Head of caudate nucleus (tissue), 42 donors: ENCODE measurements at regions of chr17 and their contacts with region 1.

Region 1: DNA sequence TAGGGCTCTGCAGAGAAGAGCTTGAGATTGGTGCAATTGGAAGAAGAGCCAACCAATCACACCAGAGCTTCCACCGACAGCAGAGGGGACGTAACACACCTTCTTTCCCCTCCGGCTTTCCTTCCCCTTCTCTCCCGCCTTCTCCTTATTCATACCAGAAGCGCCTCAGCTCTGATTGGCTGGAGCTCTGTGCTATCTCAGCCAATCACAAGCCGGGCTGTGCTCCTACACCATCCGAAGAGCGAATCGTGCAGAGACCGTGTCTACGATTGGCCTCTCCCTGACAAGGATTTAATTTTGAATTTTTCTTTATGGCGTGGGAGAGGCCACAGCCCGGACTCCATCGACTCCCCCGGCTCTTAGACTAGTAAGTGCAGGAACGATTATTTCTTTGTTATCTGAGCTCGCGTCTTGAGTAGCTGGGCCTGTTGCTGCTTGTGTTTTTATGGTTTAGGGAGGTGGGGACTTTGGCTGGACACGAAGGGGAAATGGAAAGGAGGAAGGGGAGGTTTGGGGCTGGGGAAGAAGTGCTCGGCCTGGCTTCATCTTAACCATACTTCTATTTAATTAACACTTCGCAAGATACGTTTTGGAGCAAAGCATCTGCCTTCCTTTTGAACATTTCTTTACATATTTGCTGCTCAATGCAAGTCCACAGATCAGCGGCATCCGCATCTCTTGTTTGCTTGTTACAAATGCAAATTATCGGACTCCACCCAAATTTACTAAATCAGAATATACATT is at the start of gene PRR11:
- DNase-seq: peak in 41 of 42 donors; percentile 90 to 99 (median 97)

Region 2: DNA sequence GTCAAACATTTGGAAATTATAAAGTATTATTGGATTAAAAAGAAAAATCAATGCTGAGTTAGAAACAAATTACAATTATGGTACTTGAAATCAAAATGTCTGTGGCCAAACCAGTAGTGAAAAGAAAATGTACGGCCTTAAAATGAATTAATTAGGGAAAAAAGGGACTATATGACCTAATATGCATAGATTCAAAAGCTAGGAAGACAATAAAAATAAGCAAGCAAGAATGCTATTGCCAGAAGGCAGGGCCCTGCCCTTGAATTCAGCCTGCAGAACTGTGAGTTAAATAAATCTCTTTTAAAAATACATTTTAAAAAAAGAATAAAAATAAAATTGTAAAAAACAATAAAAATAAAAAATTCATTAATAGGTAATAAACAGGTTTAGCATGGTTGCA is 137.6 kb before region 1 on chr17:
- intact Hi-C with region 1: no loop called
- DNase-seq: no peak

Region 3: DNA sequence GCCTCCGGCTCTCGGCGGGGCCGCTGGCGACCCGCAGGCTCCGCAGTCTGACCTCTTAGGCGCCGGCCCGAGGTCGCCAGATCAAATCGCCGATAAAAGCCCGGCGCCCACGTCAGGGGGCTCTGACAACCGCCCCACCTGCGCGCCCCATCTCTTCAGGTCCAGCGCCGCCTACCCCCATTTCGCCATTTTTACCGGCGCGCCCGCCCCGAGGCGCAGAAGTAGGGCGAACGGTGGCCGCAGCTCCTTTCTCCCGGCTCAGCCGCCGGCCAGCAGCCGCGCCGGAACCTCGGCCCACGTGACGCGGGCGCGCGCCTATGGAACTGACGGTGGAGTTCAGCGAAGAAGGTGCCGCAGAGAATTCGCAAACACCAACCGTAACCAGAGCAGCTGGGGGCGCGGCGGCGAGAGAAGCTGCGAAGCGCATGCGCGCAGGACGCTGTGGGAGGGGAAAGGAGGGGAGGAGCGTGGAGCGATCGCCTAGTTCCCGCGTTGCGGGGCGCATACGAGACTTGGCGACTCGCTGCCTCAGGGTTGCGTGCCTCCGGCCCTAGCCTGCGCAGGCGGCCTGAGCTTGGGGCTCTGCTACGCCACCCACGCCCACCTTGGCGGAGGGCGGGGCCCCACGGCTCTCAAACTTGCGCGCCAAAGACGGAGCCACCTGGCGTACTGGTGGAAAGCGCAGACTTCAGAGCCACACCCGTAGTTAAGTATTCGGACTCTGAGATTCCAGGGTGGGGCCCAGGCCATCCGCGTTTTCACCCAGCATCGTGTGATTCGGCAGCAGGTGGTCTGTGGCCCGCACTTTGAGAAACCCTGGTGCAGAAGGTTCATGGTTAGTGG is 48.9 kb before region 1 on chr17 and contains the start of gene TRIM37:
- intact Hi-C with region 1: loop called (anchors 2 kb)
- DNase-seq: peak; percentile 85 to 98 (median 96)